Posterior vena cava (tissue), 2 donors: ENCODE measurements at regions of chr2 and their contacts with region 1.

Region 1: DNA sequence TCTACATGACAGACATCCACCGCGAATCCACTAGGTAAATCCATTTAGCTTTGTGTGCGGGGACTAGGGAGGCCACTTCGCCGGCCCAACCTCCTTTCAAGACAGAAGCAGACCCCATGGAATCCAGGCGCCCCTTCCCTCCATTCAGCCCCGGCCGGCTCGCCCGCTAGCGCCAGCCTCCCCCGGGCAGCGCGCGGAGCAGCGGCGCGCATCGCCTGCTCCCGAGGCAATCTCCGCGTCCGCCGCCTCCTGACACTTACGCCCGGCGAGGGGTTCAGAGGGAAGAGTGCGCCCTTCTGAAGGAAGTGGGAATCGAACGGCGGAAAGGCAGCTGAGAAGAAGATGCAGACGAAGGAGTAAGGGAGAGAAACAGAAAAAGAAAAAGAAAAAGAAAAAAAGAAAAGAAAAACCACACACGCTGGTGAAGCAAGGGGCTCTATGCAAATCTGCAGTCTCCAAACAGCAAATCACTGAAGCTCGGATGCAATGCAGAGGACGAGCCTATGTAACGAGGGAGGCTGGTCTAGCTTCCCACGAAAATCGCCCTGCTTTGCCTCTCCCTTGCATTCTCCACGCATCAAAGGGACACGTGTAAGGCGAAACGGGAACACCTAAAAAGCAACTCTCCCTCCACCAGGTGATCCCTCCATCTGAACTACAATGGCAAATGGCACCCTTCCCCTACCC is 684.4 kb downstream of the NRXN1 start:
- DNase-seq: no peak

Region 2: DNA sequence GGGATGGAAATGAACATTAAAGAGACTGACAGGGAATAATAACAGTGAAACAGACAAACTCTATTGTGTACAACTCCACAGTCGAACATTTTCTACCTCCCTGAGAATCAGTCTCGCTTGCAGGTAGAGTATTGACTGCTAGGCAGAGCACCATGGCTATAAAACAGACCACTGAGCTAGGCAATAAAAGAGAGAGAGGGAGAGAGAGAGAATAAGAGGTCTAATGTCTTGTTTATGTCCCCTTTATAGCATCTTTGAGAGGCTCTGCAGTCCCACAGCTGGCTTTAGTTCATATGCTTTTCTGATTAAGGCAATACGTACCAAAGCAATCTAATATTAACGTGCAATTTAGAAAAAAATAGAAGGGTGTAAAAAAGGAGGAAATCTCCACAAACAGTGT is 31.9 kb after region 1 on chr2:
- intact Hi-C with region 1: loop called in 1 of 2 experiments (anchors 1 kb)
- DNase-seq: no peak

Region 3: GRCh38 chr2:50408936-50409335 is 61.4 kb after region 1 on chr2:
- intact Hi-C with region 1: no loop called
- DNase-seq: no peak

Region 4: DNA sequence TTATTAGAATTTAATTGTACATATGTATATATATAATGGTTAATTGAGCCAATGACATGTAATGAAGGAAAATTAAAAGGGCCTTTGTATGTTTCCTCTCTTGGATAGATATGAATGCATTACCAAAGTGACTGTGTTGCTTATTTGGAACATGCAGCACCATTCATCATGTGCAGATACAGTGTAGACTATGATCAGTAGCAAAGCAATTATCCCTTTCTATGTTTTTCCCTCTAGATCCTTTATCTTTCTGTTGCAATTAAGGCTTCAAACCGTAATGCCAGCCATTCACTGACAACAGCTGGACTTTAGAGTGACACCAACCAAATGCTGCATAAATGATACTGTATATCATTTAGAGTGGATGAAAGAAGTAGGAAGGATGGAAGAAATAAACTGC is 119.2 kb after region 1 on chr2:
- intact Hi-C with region 1: no loop called
- DNase-seq: no peak